ENCODE measurements at regions of chrX and their contacts with region 1.

Region 1: DNA sequence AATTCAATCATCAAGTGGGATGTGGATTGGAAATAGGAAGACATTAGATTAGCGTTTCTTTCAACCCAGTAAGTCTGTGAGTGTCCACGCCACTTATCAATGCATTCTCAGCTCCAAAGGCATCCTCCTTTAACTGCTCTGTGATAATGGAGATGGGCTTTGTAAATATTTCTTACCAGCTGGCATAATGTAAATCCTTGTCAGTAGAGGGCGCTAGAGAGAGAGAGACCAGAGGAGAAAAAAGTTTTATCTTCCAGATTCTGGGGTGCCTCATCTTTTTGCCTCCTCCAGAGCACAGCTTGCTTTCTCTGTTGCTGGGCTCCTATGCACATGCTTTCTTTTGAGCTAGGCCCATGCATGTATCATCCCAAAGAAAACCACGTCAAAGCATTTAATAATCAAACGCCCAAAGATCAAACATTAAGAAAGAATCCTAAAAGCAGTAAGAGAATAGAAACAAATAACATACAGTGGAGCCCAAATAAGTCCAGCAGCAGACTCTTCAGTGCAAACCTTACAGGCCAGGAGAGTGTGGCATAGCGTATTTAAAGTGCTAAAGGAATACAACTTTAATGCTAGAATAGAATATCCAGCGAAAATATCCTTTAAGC is 9.6 kb upstream of the MTMR1 start:
- DNase-seq: peak; percentile 17
- ATAC-seq: peak; percentile 53
- H3K4me3 Mint-ChIP-seq: no peak overlapping the region
- H3K27ac Mint-ChIP-seq: no peak overlapping the region
- H3K4me1 Mint-ChIP-seq: peaks cover 8% of the 10 kb centered on the region
- H3K27me3 Mint-ChIP-seq: no peaks in the 10 kb centered on the region
- CTCF ChIP-seq: peak; percentile 65

Region 2: DNA sequence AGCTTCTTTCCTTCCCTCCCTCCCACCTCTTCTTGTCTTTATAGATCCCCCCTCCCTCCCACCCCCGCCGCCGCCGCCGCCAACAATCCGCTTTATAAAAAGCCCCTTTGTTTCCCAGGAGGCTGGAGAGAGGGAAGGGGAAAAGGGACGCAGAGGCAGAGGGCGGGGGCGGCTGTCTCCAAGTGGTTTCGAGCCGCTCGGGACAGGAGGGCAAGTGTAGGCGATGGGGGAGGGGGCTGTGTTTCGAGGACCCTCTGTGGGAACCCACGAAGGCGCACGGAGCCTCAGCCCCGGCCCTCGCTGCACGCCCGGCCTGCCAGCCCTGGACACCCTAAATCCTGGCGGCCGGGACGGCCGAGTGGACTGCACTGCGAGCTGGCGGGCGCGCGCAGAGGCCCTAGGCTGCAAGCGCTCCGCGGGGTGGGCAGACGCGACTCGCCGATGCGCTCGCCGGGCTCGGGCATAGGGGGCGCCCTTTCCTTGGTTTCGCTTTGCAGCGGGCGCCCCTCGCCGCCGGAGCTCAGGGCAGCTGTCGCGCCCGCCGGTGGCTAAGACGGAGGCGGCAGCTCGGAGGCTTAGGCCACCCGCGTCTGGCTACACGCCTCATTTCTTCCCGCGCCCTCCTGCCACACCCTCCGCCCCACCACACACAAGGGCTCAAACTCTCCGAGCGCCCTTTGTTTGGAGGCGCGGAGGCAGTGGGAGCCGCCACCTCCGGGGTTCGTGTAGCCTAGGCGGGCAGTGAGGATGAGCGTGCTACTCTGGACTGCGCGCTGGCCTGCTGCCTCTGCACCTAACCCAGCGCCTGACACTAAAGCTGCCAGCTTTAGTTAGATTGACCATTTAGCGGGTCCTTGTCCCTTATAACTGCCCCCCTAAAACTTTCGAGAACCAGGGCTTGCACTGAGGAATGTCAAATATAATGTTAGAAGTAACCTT is 318.3 kb before region 1 on chrX:
- CTCF ChIA-PET with region 1: no interaction called
- POLR2A ChIA-PET with region 1: no interaction called
- intact Hi-C with region 1: loop called (anchors 5 kb)
- DNase-seq: peak; percentile 69
- ATAC-seq: peak; percentile 57
- H3K4me3 Mint-ChIP-seq: peak overlapping the region; percentile 73
- H3K27ac Mint-ChIP-seq: peak overlapping the region; percentile 34
- H3K4me1 Mint-ChIP-seq: peaks cover 22% of the 10 kb centered on the region
- H3K27me3 Mint-ChIP-seq: peaks cover 14% of the 10 kb centered on the region
- CTCF ChIP-seq: peak; percentile 60

Region 3: DNA sequence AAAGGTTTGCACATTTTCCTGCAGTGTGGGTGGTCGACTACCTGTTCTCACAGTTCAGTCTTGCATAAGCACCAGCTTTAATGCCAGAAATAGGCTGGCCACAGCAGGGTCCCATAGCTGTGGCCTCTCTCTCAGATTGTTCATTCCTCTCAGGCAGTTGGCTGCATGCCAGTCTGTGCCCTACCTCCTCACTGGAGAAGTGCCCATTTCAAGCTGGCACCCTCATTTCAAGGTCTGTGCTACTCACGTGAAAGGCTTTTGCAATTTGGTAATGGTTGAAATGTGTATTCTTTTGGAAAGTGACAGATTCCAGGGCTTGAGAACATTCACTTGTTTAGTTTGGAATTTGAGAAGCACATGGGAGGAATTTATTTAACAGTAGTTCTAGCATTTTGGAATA is 19.4 kb before region 1 on chrX:
- CTCF ChIA-PET with region 1: interaction called, 11 read pairs
- POLR2A ChIA-PET with region 1: no interaction called
- intact Hi-C with region 1: no loop called
- DNase-seq: no peak
- ATAC-seq: no peak
- H3K4me3 Mint-ChIP-seq: no peak overlapping the region
- H3K27ac Mint-ChIP-seq: no peak overlapping the region
- H3K4me1 Mint-ChIP-seq: no peaks in the 10 kb centered on the region
- H3K27me3 Mint-ChIP-seq: no peaks in the 10 kb centered on the region
- CTCF ChIP-seq: no peak

Region 4: DNA sequence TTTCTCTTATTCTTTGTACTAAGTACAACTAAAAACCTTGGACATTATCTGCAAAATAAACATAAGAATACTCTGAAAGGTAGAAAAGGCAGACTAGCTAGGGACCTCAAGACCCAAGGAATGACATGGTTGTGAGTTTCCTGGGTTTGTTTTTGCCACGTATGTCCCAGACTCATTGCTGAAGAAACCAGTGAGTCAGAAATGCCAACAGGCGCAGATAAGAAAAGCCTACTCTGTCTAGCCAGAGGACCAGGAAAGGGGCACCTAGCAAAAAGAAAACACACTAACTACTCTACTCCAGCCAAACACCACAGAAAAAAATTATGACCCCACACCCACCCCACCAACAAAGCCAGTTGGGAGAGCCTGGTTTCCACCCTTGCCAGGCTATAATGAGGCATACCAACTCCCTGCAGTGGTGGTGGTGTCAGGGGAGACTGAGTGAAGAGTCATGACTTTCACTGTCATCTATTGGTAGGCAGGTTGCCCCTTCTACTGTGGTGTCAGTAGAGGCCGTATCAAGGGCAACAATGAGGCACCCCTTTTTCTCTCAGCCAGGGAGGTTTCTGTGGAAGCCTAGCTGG is 20.5 kb after region 1 on chrX:
- CTCF ChIA-PET with region 1: interaction called, 20 read pairs
- POLR2A ChIA-PET with region 1: no interaction called
- intact Hi-C with region 1: no loop called
- DNase-seq: peak; percentile 41
- ATAC-seq: peak; percentile 83
- H3K4me3 Mint-ChIP-seq: no peak overlapping the region
- H3K27ac Mint-ChIP-seq: peak overlapping the region; percentile 85
- H3K4me1 Mint-ChIP-seq: peaks cover 65% of the 10 kb centered on the region
- H3K27me3 Mint-ChIP-seq: no peaks in the 10 kb centered on the region
- CTCF ChIP-seq: no peak

Region 5: DNA sequence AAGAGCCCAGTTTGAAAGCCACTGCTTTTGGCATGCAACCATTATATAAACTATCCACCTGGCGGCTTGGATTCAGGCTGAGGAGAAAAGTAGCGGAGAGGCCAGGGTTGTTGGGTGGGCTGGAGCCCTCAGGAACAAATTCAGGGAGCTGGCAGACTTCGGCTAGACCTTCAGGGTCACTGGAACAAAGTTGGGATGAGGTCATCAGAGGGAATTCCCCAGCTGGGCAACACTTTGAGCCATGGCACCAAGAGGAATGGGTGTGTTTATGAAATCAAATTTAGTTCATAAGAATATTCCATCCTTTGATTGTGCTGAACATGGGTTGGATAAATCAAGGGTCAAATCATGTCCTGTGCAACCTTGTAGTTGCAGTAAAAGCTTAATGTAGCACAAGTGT is 31.5 kb after region 1 on chrX:
- CTCF ChIA-PET with region 1: interaction called, 60 read pairs
- POLR2A ChIA-PET with region 1: no interaction called
- intact Hi-C with region 1: loop called (anchors 2 kb)
- DNase-seq: no peak
- ATAC-seq: no peak
- H3K4me3 Mint-ChIP-seq: no peak overlapping the region
- H3K27ac Mint-ChIP-seq: no peak overlapping the region
- H3K4me1 Mint-ChIP-seq: peaks cover 38% of the 10 kb centered on the region
- H3K27me3 Mint-ChIP-seq: no peaks in the 10 kb centered on the region
- CTCF ChIP-seq: no peak

Measured in activated CD8-positive, alpha-beta T cell treated with anti-CD3 and anti-CD28 coated beads for 36 hours (primary cell).